CD8-positive, alpha-beta T cell (primary cell): ENCODE measurements at regions of chr2 and their contacts with region 1.

Region 1: GRCh38 chr2:176356251-176356650 is 87.0 kb downstream of the MTX2 start:
- DNase-seq: no peak
- ATAC-seq: no peak
- H3K4me3 ChIP-seq: no peak overlapping the region
- H3K4me3 Mint-ChIP-seq: no peak overlapping the region
- H3K27ac ChIP-seq: no peak overlapping the region
- H3K27ac Mint-ChIP-seq: no peak overlapping the region
- H3K4me1 ChIP-seq: no peaks in the 10 kb centered on the region
- H3K4me1 Mint-ChIP-seq: peaks cover 5% of the 10 kb centered on the region
- H3K27me3 ChIP-seq: no peaks in the 10 kb centered on the region
- H3K27me3 Mint-ChIP-seq: peaks cover 8% of the 10 kb centered on the region
- CTCF ChIP-seq: no peak

Region 2: DNA sequence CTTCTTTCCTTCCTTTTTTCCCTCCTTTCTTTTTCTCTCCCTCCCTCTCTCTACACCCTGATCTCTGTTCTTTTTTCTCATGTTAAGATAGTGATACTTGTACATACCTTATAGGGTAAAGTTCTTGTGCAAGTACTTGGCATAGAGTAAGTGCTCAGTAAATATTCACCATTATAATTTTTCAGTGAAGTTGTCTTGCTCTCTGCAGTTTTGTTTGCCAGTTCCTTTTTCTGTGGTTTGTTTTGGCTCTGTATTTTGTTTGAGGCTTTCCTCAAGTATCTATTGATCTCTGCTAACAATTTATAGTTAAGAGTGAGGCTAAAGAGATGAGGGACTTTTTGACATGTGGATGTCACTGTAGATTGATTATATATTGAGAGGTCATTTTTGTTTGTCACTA is 39.1 kb before region 1 on chr2:
- CTCF ChIA-PET with region 1: no interaction called
- POLR2A ChIA-PET with region 1: no interaction called
- intact Hi-C with region 1: loop called in 1 of 2 experiments (anchors 1 kb)
- DNase-seq: no peak
- ATAC-seq: no peak
- H3K4me3 ChIP-seq: no peak overlapping the region
- H3K4me3 Mint-ChIP-seq: no peak overlapping the region
- H3K27ac ChIP-seq: no peak overlapping the region
- H3K27ac Mint-ChIP-seq: no peak overlapping the region
- H3K4me1 ChIP-seq: no peaks in the 10 kb centered on the region
- H3K4me1 Mint-ChIP-seq: peaks cover 7% of the 10 kb centered on the region
- H3K27me3 ChIP-seq: no peaks in the 10 kb centered on the region
- H3K27me3 Mint-ChIP-seq: no peaks in the 10 kb centered on the region
- CTCF ChIP-seq: no peak

Region 3: GRCh38 chr2:176443946-176444345 is 87.7 kb after region 1 on chr2:
- CTCF ChIA-PET with region 1: no interaction called
- POLR2A ChIA-PET with region 1: no interaction called
- intact Hi-C with region 1: no loop called
- DNase-seq: no peak
- ATAC-seq: no peak
- H3K4me3 ChIP-seq: no peak overlapping the region
- H3K4me3 Mint-ChIP-seq: no peak overlapping the region
- H3K27ac ChIP-seq: no peak overlapping the region
- H3K27ac Mint-ChIP-seq: no peak overlapping the region
- H3K4me1 ChIP-seq: no peaks in the 10 kb centered on the region
- H3K4me1 Mint-ChIP-seq: peaks cover 4% of the 10 kb centered on the region
- H3K27me3 ChIP-seq: peaks cover 0 to 3% of the 10 kb centered on the region in 2 experiments
- H3K27me3 Mint-ChIP-seq: peaks cover 17% of the 10 kb centered on the region
- CTCF ChIP-seq: no peak

Region 4: GRCh38 chr2:177392373-177393202 is 1036.3 kb after region 1 on chr2 and contains the start of gene AGPS:
- CTCF ChIA-PET with region 1: no interaction called
- POLR2A ChIA-PET with region 1: no interaction called
- intact Hi-C with region 1: no loop called
- DNase-seq: peak; percentile 50 to 86 (median 70)
- ATAC-seq: peak; percentile 87
- H3K4me3 ChIP-seq: peak within 1 kb of the TSS; percentile 79 to 86
- H3K4me3 Mint-ChIP-seq: peak within 1 kb of the TSS; percentile 86
- H3K27ac ChIP-seq: peak within 1 kb of the TSS; percentile 55 to 62
- H3K27ac Mint-ChIP-seq: peak within 1 kb of the TSS; percentile 93
- H3K4me1 ChIP-seq: peaks cover 35% of the 10 kb centered on the region
- H3K4me1 Mint-ChIP-seq: peaks cover 59% of the 10 kb centered on the region
- H3K27me3 ChIP-seq: no peaks in the 10 kb centered on the region
- H3K27me3 Mint-ChIP-seq: no peaks in the 10 kb centered on the region
- CTCF ChIP-seq: no peak
- total RNA-seq, gene AGPS: 19.2 to 23.8 TPM